ENCODE measurements at regions of chr5 and their contacts with region 1.

Region 1: DNA sequence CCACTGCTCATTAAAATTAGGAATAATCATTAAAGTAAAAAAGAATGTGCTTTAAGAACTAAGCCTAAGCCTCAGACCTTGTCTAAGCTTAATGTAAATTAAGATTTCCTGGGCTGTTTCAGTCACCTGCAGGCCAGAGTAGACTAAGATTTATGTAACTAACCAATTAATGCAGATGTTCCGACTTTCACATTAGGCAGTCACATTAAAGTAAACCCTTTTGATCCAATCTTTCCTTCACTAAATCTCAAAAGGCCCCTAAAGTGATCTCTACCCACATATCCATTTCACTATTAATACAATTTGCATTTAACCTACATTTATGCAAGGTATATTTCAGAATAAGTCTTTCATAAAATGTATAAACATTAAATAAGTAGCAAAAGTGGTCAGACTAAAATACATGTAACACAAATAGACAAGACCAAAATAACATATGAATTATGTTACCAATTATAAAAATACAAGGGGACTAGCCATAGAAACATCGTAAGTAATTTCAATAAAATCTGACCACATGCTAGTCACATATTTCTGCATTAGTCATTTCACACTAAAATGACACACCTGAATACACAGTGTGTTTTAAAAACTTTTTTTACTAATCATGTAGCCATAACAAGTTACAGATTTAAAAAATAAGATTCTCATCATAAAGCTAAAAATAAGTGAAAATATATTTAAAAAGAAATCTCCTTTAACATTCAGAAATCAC is 7.7 kb downstream of the NR3C1 start:
- DNase-seq: peak; percentile 38
- H3K4me3 ChIP-seq: peak overlapping the region; percentile 99
- H3K27ac ChIP-seq: peak overlapping the region; percentile 98
- H3K4me1 ChIP-seq: peaks cover 53% of the 10 kb centered on the region
- H3K27me3 ChIP-seq: no peaks in the 10 kb centered on the region

Region 2: DNA sequence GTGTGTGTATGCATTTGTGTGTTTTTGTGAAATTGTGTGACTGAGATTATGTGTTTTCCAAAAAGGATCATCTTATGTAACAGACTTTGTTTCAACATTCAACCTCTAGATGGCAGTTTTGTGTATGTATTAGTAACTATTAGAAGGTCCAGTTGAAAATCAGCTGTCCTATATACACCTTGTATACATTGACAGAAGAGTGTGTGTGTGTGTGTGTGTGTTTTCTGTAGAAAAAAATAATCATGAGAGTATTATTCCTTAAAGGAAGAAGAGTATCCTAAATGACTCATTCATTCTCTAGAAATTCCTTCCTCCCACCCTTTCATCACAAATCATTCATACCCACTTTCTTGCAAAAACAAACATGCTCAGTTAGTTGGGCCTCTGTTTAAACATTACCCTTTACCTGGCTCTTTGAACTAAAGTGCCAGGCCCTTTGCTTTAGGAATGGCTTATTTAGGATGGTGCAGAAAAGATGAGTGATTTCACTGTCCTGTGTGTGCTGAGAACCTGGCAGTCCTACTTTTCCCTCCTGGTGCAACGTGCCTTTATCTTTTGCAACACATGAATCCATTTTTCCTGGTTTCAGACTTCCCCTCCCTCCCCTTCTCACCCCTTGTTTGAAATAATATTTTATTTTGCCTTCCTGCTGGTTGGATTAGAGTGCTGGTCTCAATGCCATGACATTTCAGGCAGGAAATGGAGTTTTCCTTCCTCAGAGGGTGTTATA is 473.4 kb before region 1 on chr5:
- in situ Hi-C with region 1: loop called (anchors 10 kb)
- DNase-seq: peak; percentile 70
- H3K4me3 ChIP-seq: no peak overlapping the region
- H3K27ac ChIP-seq: no peak overlapping the region
- H3K4me1 ChIP-seq: peaks cover 20% of the 10 kb centered on the region
- H3K27me3 ChIP-seq: no peaks in the 10 kb centered on the region

Region 3: GRCh38 chr5:143023411-143024096 is 372.2 kb before region 1 on chr5:
- in situ Hi-C with region 1: loop called (anchors 10 kb)
- DNase-seq: peak; percentile 63
- H3K4me3 ChIP-seq: no peak overlapping the region
- H3K27ac ChIP-seq: no peak overlapping the region
- H3K4me1 ChIP-seq: peaks cover 10% of the 10 kb centered on the region; the same call in 1 of the 2 replicates
- H3K27me3 ChIP-seq: no peaks in the 10 kb centered on the region

Measured in GM23248 (cell line).